CD14-positive monocyte (primary cell): ENCODE measurements at regions of chr18 and their contacts with region 1.

Region 1: GRCh38 chr18:34978953-34979608 is 62.1 kb upstream of the MAPRE2 start:
- DNase-seq: peak; percentile 86 to 99 (median 96)
- H3K4me3 ChIP-seq: peak overlapping the region; percentile 49 to 83 (median 62)
- H3K4me3 Mint-ChIP-seq: peak overlapping the region; percentile 88 to 94
- H3K27ac ChIP-seq: peak overlapping the region in 1 of 2 donors; percentile 58
- H3K27ac Mint-ChIP-seq: peak overlapping the region in 6 of 7 donors; percentile 61 to 88 (median 76)
- H3K4me1 ChIP-seq: peaks cover 25 to 37% of the 10 kb centered on the region in 2 donors
- H3K4me1 Mint-ChIP-seq: peaks cover 30% of the 10 kb centered on the region
- H3K27me3 ChIP-seq: peaks cover 10 to 24% of the 10 kb centered on the region in 2 donors
- H3K27me3 Mint-ChIP-seq: peaks cover 17 to 36% (median 25%) of the 10 kb centered on the region in 3 donors
- CTCF ChIP-seq: no peak

Region 2: GRCh38 chr18:34912010-34912721 is 66.9 kb before region 1 on chr18:
- intact Hi-C with region 1: no loop called
- DNase-seq: no peak
- H3K4me3 ChIP-seq: no peak overlapping the region
- H3K4me3 Mint-ChIP-seq: no peak overlapping the region
- H3K27ac ChIP-seq: no peak overlapping the region
- H3K27ac Mint-ChIP-seq: no peak overlapping the region
- H3K4me1 ChIP-seq: no peaks in the 10 kb centered on the region
- H3K4me1 Mint-ChIP-seq: peaks cover 10% of the 10 kb centered on the region
- H3K27me3 ChIP-seq: no peaks in the 10 kb centered on the region
- H3K27me3 Mint-ChIP-seq: no peaks in the 10 kb centered on the region
- CTCF ChIP-seq: no peak

Region 3: GRCh38 chr18:35040988-35041814 is 62.1 kb after region 1 on chr18 and contains the start of gene MAPRE2:
- intact Hi-C with region 1: loop called in 1 of 2 experiments (anchors 2 kb)
- DNase-seq: peak; percentile 99 to 100 (median 100)
- H3K4me3 ChIP-seq: peak within 1 kb of the TSS; percentile 61 to 96 (median 95)
- H3K4me3 Mint-ChIP-seq: peak within 1 kb of the TSS; percentile 98 to 100
- H3K27ac ChIP-seq: peak within 1 kb of the TSS; percentile 88 to 95
- H3K27ac Mint-ChIP-seq: peak within 1 kb of the TSS; percentile 96 to 99 (median 98)
- H3K4me1 ChIP-seq: peaks cover 67 to 81% of the 10 kb centered on the region in 2 donors
- H3K4me1 Mint-ChIP-seq: peaks cover 77% of the 10 kb centered on the region
- H3K27me3 ChIP-seq: no peaks in the 10 kb centered on the region
- H3K27me3 Mint-ChIP-seq: peaks cover 0 to 2% (median 0%) of the 10 kb centered on the region in 3 donors
- CTCF ChIP-seq: no peak
- polyA plus RNA-seq, gene MAPRE2: 22.0 to 48.1 (median 37.1) TPM